ENCODE measurements at regions of chr9 and their contacts with region 1.

Region 1: GRCh38 chr9:86354011-86354817 is at the start of gene TUT7:
- DNase-seq: peak; percentile 71
- H3K4me3 ChIP-seq: peak within 1 kb of the TSS; percentile 81 to 98 (median 88)
- H3K27ac ChIP-seq: peak within 1 kb of the TSS; percentile 96 to 99 (median 99)
- H3K4me1 ChIP-seq: peaks cover 0 to 61% (median 39%) of the 10 kb centered on the region in 3 donors
- H3K27me3 ChIP-seq: no peaks in the 10 kb centered on the region
- CTCF ChIP-seq: peak in 1 of 6 experiments; percentile 5
- POLR2A ChIP-seq: peak in 3 of 4 donors; percentile 70 to 92 (median 82)
- total RNA-seq, gene TUT7: 34.3 to 71.0 (median 54.9) TPM

Region 2: DNA sequence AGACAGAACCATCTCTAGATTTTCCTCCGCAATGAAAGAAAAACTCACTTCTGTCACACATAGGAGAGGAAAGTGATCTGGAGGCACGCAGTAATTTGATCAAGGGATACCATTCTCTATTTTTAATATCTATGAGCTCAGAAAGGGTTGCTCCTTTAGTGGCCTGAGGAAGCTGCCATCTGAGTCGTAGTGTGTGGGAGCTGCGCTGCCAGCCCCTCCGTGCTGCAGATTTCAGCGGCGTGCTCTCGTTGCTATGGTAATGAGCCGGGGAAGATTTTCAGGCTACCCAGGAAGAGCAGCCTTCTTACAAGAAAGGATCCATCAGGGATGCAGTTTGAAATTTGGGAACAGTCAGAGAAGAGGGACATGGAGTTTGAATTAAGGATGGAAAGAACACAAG is 237.8 kb before region 1 on chr9:
- intact Hi-C with region 1: no loop called
- DNase-seq: no peak
- H3K4me3 ChIP-seq: no peak overlapping the region
- H3K27ac ChIP-seq: no peak overlapping the region
- H3K4me1 ChIP-seq: no peaks in the 10 kb centered on the region
- H3K27me3 ChIP-seq: no peaks in the 10 kb centered on the region
- CTCF ChIP-seq: no peak
- POLR2A ChIP-seq: no peak

Region 3: DNA sequence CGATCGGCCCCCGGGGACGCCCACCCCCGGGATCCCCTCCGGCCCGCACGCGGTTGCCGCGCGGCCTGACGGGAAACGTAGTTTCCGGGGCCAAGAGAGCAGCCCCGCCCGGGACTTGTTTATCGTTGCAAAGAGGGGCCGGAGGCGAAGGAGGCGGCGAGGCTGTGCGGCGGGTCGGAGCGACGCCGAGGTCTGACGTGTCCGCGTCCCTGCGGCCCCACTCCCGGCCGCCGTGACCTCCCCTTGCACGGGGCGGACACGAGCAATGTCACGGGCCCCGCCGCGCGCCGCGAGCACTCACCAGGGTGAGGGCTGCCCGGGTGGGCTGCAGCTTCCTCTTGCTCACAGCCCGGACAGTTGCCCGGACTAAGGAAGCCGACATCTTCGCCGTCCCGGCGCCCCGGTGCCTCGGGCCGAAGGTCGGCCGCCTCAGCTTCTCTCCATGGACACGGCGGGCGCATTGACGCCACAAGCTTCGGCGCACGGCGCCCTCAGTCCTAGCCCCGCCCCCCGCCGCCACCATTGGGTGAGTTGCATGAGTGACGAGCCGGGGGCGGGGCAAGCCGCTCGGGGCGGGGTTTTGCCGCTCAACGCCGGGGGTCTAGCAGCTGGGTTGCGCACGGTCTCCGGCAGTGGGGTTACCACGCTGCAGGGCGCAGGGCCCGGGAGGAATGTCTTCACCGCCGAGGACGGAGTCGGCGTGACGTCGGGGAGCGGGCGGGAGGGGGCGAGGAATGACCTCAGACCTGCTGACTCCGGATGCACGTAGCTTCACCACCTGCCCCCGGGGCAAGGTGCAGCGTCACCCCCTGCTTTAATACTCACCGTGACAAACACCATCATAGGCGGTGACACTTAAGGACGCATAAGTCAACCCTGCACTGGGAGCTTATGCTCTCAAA is 71.9 kb before region 1 on chr9 and contains the start of gene ISCA1:
- intact Hi-C with region 1: loop called (anchors 10 kb)
- DNase-seq: peak; percentile 86
- H3K4me3 ChIP-seq: peak within 1 kb of the TSS; percentile 91 to 95 (median 92)
- H3K27ac ChIP-seq: peak within 1 kb of the TSS; percentile 96 to 98 (median 98)
- H3K4me1 ChIP-seq: peaks cover 4 to 50% (median 20%) of the 10 kb centered on the region in 3 donors
- H3K27me3 ChIP-seq: no peaks in the 10 kb centered on the region
- CTCF ChIP-seq: no peak
- POLR2A ChIP-seq: peak in 3 of 4 donors; percentile 84 to 92 (median 86)
- total RNA-seq, gene ISCA1: 9.7 to 31.9 (median 24.7) TPM

Measured in esophagus squamous epithelium (tissue), 5 donors.